Common myeloid progenitor, CD34-positive (primary cell): ENCODE measurements at regions of chr7 and their contacts with region 1.

Region 1: GRCh38 chr7:140673063-140673773 is 473 bp downstream of the ADCK2 start:
- DNase-seq: peak; percentile 40 to 69 (median 50)
- H3K4me3 ChIP-seq: peak overlapping the region; percentile 64 to 87 (median 76)
- H3K27ac ChIP-seq: peak overlapping the region in 1 of 2 experiments; percentile 49
- H3K4me1 ChIP-seq: peaks cover 0 to 44% (median 24%) of the 10 kb centered on the region in 4 experiments
- H3K27me3 ChIP-seq: no peaks in the 10 kb centered on the region

Region 2: DNA sequence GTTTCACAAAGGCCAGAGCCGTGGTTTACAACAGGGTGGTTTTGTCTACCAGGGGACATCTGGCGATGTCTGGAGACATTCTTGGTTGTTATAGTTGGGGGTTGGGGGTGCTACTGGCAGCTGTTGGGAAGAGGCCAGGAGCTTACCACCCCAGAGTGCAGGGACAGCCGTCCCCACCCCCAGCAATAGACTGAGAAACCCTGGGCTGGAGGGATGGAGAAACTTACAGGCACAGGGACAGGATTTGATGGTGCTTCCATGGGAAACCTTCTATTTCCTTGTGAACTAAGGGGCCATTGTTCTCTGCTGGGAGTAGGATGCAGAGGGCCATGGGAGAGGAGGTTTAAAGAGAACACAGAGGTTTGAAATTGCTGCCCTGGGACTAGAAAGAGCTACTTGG is 10.4 kb after region 1 on chr7:
- CTCF ChIA-PET with region 1: interaction called, 25 read pairs
- POLR2A ChIA-PET with region 1: interaction called, 3 read pairs
- DNase-seq: no peak
- H3K4me3 ChIP-seq: no peak overlapping the region
- H3K27ac ChIP-seq: no peak overlapping the region
- H3K4me1 ChIP-seq: no peaks in the 10 kb centered on the region
- H3K27me3 ChIP-seq: no peaks in the 10 kb centered on the region

Region 3: DNA sequence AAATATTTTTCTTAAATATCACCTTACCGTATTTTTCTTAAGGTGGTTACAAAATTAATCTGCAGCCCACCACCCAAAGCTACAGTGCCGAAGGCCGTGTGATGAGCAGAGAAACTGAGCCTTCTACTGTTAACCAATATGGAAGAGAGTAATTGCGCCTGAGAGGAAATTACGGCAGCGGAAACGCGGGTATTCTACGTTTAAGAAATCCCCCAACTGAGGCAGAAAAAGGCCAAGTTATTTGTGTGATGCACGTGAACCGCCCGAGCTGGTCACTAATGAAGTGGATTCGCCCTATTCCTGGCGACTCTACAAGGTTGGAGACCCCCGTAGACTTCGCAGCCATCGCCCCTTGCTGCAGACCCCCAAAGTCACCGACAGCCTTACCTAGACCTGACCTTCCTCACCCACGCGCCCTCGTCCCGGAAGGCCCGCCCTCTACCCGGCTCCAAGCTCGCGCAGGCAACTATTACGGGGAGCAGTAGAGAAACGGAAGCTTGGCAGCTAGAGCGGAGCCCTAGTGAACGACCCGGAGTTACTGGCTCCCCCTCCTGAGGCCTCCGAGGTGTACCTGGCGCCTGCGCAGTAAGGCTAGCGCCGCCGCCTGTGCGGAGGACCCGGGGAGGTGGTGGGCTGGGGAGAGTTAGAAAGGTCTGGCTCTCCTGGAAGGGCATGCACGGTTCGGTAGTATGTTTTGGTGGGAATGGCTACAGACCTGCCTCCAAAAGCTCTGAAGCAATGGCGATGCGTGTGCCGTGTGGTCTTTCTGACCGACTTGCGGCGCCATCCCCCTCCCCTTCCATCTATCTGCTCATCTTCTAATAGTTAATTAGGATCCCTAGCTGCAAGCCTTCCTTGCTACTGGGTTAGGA is 341.5 kb after region 1 on chr7 and contains the start of gene MRPS33:
- CTCF ChIA-PET with region 1: interaction called, 14 read pairs
- POLR2A ChIA-PET with region 1: no interaction called
- DNase-seq: peak; percentile 97 to 98 (median 97)
- H3K4me3 ChIP-seq: peak within 1 kb of the TSS; percentile 65 to 97 (median 80)
- H3K27ac ChIP-seq: peak within 1 kb of the TSS; percentile 95 to 98
- H3K4me1 ChIP-seq: peaks cover 11 to 20% (median 16%) of the 10 kb centered on the region in 4 experiments
- H3K27me3 ChIP-seq: peaks cover 2 to 16% (median 5%) of the 10 kb centered on the region in 5 experiments